Psoas muscle (tissue), 8 donors: ENCODE measurements at regions of chr2 and their contacts with region 1.

Region 1: GRCh38 chr2:42828487-42829425 is 36.4 kb upstream of the HAAO start:
- DNase-seq: peak; percentile 77 to 85
- ATAC-seq: peak; percentile 85 to 95 (median 88)
- H3K4me3 ChIP-seq: peak overlapping the region; percentile 63
- H3K27ac ChIP-seq: no peak overlapping the region
- H3K4me1 ChIP-seq: peaks cover 9% of the 10 kb centered on the region
- H3K27me3 ChIP-seq: no peaks in the 10 kb centered on the region
- CTCF ChIP-seq: peak; percentile 91

Region 2: DNA sequence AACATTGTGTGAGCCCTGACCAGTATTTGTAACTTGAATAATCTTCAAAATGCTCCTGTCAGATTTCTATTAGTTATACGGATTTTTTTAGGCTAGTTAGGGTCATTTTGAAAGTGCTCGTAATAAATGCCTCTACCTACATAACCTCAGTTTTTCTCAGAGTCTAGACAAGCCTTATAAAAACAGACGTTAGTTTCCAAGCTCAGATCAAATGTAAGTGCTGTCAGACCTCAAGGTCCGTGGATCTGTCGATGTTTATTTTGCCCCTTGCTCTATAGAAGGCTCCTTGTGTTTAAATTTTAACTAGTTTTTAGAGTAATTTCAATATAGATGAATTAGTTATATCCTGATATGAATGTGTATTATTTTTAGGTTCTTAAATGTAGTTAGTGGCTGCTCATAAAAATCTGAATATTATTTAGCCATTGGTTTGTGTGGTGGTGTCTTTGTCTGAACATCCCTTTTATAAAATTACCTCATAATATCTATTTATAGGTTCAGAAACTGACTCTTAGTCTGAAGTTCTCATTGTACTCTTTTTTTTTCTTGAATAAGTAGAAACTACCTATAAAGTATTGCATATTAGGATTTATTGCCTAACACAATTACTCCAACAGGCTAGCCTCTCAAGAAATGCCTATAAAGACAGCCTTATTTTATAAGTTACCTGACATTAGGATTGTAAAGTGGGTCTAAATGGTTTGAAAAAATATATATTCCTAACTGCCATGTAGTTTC is 189.2 kb before region 1 on chr2:
- intact Hi-C with region 1: no loop called
- DNase-seq: no peak
- ATAC-seq: peak in 2 of 4 donors; percentile 51 to 71
- H3K4me3 ChIP-seq: peak overlapping the region; percentile 17
- H3K27ac ChIP-seq: peak overlapping the region; percentile 3
- H3K4me1 ChIP-seq: peaks cover 11% of the 10 kb centered on the region
- H3K27me3 ChIP-seq: no peaks in the 10 kb centered on the region
- CTCF ChIP-seq: no peak

Region 3: DNA sequence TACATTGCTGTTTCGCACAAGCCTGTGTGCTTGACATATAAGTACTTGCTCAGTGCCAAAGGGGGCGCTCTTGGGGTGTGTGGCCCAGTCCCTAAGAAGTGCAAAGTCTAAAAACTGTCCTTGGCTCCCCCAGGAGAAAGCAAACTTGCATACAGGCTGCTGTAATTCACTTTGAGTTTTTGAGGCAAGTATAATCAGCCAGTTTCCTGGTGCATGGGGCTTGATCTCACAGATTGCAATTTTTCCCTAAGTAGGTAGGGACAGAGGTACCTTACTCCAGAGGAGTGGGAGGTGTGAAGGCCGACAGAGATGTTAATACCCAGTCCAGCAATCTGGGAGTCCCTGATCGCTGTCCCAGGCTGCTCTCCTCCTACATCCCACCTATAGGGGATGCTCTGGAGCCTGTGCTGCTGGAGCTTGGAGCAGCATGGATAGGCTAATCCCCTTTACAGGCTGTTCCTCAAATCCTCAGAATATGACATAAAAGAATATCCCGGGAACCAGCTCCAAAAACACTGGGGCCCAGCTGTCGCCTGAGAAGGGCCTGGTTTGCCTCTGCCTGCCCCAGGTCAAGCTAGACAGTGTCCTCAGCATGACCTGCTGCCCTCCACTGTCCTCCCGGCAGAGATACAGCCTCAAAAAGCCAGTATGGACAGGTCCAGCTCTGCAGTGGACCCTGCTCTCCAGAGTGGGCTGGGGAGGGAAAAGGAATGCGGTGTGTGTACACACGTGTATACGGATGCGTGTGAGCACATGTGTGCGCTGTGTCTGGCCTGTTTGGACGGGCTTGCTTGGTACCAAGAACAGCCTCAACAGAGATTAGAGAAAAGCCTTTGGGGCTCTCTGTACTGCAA is 100.2 kb after region 1 on chr2:
- intact Hi-C with region 1: loop called in 1 of 2 experiments (anchors 5 kb)
- DNase-seq: no peak
- ATAC-seq: no peak
- H3K4me3 ChIP-seq: no peak overlapping the region
- H3K27ac ChIP-seq: peak overlapping the region; percentile 81
- H3K4me1 ChIP-seq: peaks cover 69% of the 10 kb centered on the region
- H3K27me3 ChIP-seq: no peaks in the 10 kb centered on the region
- CTCF ChIP-seq: no peak

Region 4: GRCh38 chr2:42944779-42945415 is 116.1 kb after region 1 on chr2:
- intact Hi-C with region 1: loop called in 1 of 2 experiments (anchors 5 kb)
- DNase-seq: no peak
- ATAC-seq: no peak
- H3K4me3 ChIP-seq: no peak overlapping the region
- H3K27ac ChIP-seq: no peak overlapping the region
- H3K4me1 ChIP-seq: peaks cover 7% of the 10 kb centered on the region
- H3K27me3 ChIP-seq: no peaks in the 10 kb centered on the region
- CTCF ChIP-seq: no peak

Region 5: GRCh38 chr2:43484323-43484930 is 655.7 kb after region 1 on chr2:
- intact Hi-C with region 1: loop called (anchors 2 to 5 kb)
- DNase-seq: no peak
- ATAC-seq: peak; percentile 65 to 80 (median 70)
- H3K4me3 ChIP-seq: no peak overlapping the region
- H3K27ac ChIP-seq: peak overlapping the region; percentile 47
- H3K4me1 ChIP-seq: peaks cover 32% of the 10 kb centered on the region
- H3K27me3 ChIP-seq: no peaks in the 10 kb centered on the region
- CTCF ChIP-seq: peak; percentile 73

Region 6: DNA sequence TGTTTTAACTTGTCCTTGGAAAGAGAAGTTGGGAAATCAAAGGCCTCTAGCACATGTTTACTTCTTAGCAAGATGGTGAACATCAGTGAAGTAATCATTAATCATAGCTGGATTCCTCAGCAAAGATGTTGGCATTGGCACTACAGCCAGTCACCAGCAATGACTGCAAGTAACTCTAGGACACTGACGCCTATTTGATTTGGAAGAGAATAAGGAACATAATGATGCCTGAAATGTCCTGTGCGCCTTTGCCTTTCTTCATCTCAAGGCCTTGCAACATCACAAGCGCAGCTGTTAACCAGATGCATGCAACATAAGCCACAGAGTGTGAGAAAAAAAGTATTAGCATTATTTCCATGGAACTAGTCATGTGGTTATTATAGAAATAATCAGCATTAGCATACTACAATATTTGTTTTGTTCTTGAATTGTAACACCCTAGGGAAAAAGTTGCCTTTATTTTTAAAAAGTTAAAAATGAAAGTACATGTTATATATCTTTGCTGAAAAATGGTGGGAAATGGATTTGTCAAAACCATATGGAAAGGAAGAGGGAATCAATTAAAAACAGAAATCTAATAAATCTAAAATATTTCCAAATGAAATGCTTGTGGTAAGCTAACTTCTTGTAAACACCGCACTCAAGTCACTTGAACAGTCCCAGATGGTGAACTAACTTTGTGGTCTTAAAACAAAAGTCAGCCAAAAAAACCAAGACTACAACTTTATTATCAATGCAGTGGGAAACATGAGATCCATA is 711.4 kb after region 1 on chr2:
- intact Hi-C with region 1: loop called in 1 of 2 experiments (anchors 2 kb)
- DNase-seq: peak; percentile 66 to 77
- ATAC-seq: peak; percentile 91 to 98 (median 97)
- H3K4me3 ChIP-seq: no peak overlapping the region
- H3K27ac ChIP-seq: peak overlapping the region; percentile 71
- H3K4me1 ChIP-seq: peaks cover 9% of the 10 kb centered on the region
- H3K27me3 ChIP-seq: no peaks in the 10 kb centered on the region
- CTCF ChIP-seq: no peak

Region 7: DNA sequence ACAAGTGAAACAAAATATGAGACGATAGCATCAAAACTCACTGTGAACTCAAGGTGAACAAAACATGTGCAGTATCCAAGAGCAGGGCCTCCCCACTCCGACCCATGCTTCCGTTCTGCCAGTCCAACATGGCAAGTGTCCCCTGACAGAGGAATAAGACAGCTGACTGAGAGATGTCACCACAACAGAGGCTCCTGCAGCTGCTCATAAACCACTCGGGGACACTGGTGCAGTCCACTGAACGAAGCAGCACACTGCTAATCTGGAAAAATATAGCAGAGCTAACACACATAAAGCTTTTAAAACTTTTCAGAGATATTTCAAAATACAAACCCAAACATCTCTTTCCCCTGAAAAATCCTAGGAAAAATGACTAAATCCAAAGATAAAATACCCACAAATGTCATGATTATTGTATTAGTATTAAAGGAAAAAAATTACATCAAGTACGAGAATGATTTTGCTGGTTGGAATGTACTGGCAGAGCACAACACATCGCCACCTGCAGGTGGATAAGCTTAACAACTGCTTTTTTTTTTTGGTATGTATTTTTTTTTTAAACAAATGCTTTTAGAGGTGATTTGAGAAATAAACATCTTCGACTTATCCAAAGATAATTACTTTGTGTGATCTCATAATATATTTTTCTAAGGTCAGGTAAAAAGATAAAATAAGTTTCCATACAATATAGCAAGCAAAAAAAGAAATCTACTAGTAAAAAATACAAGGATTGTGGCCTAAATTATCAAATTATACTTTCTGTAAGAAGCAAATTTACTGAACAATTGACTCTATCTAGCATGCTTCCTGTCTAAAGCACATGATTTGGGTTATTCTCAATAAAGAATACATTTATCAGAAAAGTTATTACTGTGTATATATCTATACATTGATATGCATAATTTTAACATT is 748.5 kb after region 1 on chr2:
- intact Hi-C with region 1: loop called in 1 of 2 experiments (anchors 10 kb)
- DNase-seq: no peak
- ATAC-seq: peak in 2 of 4 donors; percentile 58 to 73
- H3K4me3 ChIP-seq: no peak overlapping the region
- H3K27ac ChIP-seq: no peak overlapping the region
- H3K4me1 ChIP-seq: no peaks in the 10 kb centered on the region
- H3K27me3 ChIP-seq: no peaks in the 10 kb centered on the region
- CTCF ChIP-seq: peak; percentile 75

Region 8: DNA sequence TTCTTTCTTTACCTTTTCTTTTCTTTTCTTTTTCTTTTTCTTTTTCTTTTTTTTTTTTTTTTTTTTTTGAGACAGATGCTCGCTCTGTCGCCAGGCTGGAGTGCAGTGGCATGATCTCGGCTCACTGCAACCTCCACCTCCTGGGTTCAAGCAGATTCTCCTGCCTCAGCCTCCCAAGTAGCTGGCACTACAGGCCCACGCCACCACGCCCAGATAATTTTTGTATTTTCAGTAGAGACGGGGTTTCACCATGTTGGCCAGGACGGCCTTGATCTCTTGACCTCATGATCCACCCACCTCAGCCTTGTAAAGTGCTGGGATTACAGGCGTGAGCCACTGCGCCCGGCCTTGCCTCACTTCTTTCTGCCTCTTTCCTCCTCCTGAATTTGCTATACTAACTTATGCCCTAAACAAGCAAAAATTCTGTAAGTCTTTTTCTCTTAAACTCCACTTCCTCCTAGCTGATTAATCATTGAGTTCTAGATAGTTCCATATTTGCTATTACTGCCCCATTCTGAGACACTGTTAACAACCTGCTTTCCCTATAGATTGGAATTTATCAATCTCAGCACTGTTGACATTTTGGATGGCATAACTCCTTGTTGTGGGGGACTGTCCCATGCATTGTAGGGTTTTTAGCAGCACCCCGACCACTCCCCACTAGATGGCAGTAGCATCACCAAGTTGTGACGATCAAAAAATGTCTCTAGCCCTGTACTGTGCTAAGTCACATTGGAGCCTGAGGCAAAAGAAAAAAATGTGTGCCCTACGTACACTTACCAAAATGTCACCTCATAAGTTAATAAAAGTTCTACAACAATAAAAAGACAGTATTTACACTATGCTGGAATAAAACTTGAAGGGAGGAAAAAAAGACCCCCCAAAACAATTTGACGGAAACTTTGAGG is 783.5 kb after region 1 on chr2:
- intact Hi-C with region 1: loop called in 1 of 2 experiments (anchors 1 kb)
- DNase-seq: peak; percentile 55 to 62
- ATAC-seq: peak; percentile 81 to 94 (median 92)
- H3K4me3 ChIP-seq: no peak overlapping the region
- H3K27ac ChIP-seq: no peak overlapping the region
- H3K4me1 ChIP-seq: no peaks in the 10 kb centered on the region
- H3K27me3 ChIP-seq: peaks cover 0 to 1% (median 0%) of the 10 kb centered on the region in 3 donors
- CTCF ChIP-seq: peak; percentile 70